Psoas muscle (tissue), 8 donors: ENCODE measurements at regions of chr20 and their contacts with region 1.

Region 1: DNA sequence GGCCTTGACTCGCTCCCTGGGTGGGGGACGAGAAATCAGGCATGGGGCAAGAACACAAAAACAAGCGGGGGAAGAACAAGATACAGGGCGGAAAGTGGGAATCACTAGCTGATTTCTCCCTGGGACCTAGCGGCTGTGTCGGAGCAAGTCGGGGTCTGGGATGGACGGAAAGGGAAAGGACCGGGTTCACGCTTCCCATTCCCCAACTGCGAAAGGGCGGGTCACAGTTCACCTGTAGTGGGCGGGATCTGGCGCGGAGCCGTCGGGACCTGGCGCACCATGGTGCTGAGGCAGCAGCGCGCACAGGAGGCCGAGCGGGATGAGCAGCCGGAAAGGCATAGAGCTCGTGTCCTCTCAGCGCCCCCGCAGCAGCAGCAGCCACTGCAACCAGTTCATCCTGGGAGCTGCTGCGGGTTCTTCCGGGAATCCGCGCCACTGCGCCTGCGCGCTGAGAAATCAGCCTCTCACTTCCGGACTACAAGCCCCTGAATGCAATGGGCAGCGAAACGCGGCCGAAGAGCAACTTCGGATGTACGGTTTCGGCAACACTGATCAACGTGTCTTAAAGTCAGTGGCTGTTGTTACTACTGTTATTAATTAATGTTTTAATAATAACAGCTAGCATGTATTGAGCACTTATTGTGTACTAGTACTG is at the start of gene EDEM2:
- DNase-seq: peak; percentile 96 to 97
- ATAC-seq: peak; percentile 95 to 99 (median 96)
- H3K4me3 ChIP-seq: peak within 1 kb of the TSS; percentile 84
- H3K27ac ChIP-seq: peak within 1 kb of the TSS; percentile 77
- H3K4me1 ChIP-seq: peaks cover 8% of the 10 kb centered on the region
- H3K27me3 ChIP-seq: no peaks in the 10 kb centered on the region
- CTCF ChIP-seq: no peak
- total RNA-seq, gene EDEM2: 5.0 to 8.5 (median 6.2) TPM

Region 2: DNA sequence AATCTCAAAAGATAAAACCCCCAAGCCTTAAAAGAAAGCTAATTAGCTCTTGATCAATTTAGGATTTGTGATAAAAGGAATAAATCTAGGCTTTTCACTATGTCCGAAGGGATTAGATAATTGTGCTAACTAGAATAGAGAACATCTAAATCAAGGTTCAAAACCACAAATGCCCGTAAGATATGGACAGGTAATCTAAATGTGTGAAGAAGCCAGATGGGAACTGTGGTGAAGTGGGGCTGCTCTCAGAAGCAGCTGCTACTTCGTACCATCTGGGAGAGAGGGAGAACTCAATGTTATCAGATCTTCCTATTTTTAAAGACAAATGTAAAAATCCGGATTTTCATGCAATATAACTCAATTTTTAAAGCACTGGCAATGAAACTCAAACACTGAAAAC is 365.8 kb before region 1 on chr20:
- intact Hi-C with region 1: no loop called
- DNase-seq: no peak
- ATAC-seq: no peak
- H3K4me3 ChIP-seq: no peak overlapping the region
- H3K27ac ChIP-seq: peak overlapping the region; percentile 69
- H3K4me1 ChIP-seq: peaks cover 14% of the 10 kb centered on the region
- H3K27me3 ChIP-seq: no peaks in the 10 kb centered on the region
- CTCF ChIP-seq: no peak

Region 3: DNA sequence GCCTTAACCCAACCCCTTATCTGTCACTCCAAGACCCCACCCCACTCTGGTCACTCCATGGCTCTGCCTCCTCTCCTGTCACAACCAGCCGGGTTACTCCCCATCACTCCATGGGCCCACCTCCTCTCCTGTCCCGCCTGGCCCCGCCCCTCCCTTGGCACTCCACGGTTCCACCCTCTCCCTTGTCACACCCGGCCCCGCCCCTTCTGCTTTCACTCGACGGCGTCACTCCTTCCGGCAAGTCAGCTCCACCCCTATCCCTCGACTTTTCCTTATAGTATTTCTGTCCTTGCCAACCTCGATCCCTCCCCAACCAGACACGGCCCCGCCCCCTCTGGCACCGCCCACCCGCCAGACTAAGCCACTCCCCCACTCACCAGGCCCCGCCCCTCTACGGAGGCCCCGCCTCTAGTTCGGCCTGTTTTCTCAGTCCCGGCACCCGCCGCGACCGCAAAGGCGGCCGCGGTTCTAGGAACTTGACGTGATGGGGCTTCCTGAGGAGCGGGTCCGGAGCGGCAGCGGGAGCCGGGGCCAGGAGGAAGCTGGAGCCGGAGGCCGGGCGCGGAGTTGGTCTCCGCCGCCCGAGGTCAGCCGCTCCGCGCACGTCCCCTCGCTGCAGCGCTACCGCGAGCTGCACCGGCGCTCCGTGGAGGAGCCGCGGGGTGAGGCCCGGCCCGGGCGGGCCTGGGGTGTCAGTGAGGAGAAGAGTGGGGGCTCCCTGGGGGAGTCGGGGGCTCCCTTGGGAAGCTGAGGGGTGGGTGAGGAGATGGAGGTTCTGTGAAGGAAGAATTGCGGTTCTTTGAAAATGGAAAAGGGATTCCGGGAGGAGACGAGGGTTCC is 270.7 kb before region 1 on chr20 and contains the start of gene ACSS2:
- intact Hi-C with region 1: no loop called
- DNase-seq: peak; percentile 99
- ATAC-seq: peak; percentile 84 to 90 (median 87)
- H3K4me3 ChIP-seq: peak within 1 kb of the TSS; percentile 97
- H3K27ac ChIP-seq: peak within 1 kb of the TSS; percentile 96
- H3K4me1 ChIP-seq: peaks cover 39% of the 10 kb centered on the region
- H3K27me3 ChIP-seq: no peaks in the 10 kb centered on the region
- CTCF ChIP-seq: no peak
- total RNA-seq, gene ACSS2: 106 to 161 (median 115) TPM

Region 4: GRCh38 chr20:35092524-35093266 is 54.4 kb before region 1 on chr20 and contains the start of gene TRPC4AP:
- intact Hi-C with region 1: loop called in 1 of 2 experiments (anchors 5 kb)
- DNase-seq: peak; percentile 90 to 95
- ATAC-seq: peak; percentile 95 to 98 (median 96)
- H3K4me3 ChIP-seq: peak within 1 kb of the TSS; percentile 82
- H3K27ac ChIP-seq: peak within 1 kb of the TSS; percentile 96
- H3K4me1 ChIP-seq: peaks cover 38% of the 10 kb centered on the region
- H3K27me3 ChIP-seq: no peaks in the 10 kb centered on the region
- CTCF ChIP-seq: peak; percentile 90
- total RNA-seq, gene TRPC4AP: 36.0 to 62.3 (median 58.1) TPM

Region 5: DNA sequence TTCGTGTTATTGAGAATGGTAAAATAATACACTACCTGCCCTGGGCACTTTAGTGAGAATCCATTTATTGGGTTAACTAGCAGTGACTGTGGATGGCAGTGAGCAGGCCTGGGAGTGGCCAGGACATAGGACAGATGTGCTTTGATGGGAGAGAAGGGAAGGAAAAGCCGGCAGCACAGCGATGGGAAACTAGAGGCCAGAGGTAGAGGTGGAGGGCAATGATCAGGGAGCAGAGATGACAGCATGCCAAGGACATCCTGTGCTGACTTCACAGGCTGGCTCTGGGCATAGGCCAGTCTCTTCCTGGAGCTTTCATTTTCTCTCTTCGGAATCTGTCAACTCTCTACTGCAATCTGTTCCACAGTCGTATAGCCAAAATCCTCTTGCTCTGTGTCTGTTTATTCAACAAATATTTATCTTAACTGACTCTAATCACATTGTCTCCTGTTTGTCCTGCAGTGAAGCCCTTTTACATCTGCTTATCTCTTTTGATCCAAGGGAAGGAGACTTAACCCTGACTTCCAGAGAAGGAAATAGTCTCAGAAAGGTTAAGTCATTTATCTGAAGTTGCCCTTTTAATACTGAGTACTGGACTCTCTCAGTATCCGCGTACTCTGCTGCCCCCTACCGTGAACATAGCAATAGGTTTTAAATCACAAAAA is 61.0 kb after region 1 on chr20:
- intact Hi-C with region 1: loop called in 1 of 2 experiments (anchors 2 kb)
- DNase-seq: peak; percentile 78 to 84
- ATAC-seq: peak; percentile 80 to 99 (median 94)
- H3K4me3 ChIP-seq: peak overlapping the region; percentile 30
- H3K27ac ChIP-seq: peak overlapping the region; percentile 65
- H3K4me1 ChIP-seq: peaks cover 6% of the 10 kb centered on the region
- H3K27me3 ChIP-seq: no peaks in the 10 kb centered on the region
- CTCF ChIP-seq: peak; percentile 77

Region 6: DNA sequence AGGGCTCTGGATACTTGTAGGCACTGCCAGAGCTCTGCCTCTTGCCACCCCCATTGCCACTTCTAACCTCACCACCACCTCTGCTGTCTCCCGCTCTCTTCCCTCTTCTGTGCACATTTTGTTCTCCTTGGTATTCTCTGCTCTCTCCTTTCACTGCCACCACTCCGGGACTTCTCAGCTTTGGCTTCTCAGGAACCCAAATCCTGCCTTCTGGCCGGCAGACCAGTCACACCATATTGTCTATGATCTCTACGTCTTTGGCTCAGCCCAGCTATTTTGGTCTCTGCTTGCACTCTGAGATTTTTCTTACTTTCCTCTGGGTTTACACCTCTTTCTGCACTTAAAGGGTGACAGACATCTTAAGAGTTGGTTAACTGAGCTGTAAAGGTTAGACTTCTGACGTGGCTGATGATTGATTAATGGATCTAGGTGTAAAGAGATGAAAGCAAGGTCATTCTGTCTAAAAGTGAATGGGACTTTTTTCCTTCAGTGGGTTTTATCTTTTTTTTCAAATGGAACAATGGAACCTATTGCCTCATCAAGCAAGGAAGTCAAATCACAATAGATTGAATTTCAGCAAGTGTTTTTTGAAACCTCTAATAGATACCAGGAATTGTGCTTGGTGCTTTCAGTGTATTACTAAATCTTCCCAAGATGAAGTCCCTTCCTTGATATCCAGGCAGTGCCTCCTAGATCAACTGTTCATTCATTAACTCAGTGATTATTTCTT is 93.2 kb after region 1 on chr20:
- intact Hi-C with region 1: no loop called
- DNase-seq: no peak
- ATAC-seq: no peak
- H3K4me3 ChIP-seq: no peak overlapping the region
- H3K27ac ChIP-seq: no peak overlapping the region
- H3K4me1 ChIP-seq: no peaks in the 10 kb centered on the region
- H3K27me3 ChIP-seq: no peaks in the 10 kb centered on the region
- CTCF ChIP-seq: no peak

Region 7: DNA sequence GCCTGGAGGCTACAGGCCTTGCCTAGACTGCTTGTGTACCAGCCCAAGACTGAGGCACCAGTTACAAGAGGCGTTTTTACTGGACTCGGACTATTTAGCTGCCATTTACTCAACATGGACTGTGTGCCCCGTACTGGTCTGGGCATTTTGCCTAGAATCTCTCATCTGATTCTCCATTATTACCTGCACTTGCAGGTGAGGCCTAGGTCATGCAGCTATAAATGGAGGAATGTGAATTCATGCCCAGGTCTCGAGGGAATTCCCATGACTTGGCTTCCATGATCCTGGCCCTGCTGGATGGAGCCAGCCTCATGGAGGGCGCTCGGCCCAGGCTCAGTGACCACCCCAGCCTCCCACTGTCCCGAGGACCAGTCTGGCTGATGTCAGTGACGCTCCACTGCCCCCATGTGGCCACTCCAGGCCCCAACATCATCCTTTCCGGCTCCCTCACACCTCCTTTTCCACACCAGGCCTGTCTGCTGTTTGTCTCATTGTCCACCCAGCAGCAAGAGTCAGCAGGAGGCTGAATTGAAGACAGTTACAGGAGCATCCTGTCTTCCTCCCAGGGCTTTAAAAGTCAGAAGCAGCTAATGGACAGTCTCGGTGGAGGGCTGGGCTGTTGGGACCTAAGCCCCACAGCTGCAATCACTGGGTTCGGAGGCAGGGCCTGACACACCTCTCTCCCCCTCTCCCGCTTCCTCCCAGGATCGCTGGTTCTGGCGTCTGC is 122.2 kb after region 1 on chr20:
- intact Hi-C with region 1: loop called (anchors 5 to 10 kb)
- DNase-seq: peak; percentile 66 to 76
- ATAC-seq: peak; percentile 72 to 83 (median 76)
- H3K4me3 ChIP-seq: no peak overlapping the region
- H3K27ac ChIP-seq: no peak overlapping the region
- H3K4me1 ChIP-seq: no peaks in the 10 kb centered on the region
- H3K27me3 ChIP-seq: no peaks in the 10 kb centered on the region
- CTCF ChIP-seq: peak; percentile 56

Region 8: GRCh38 chr20:35277531-35278395 is 130.7 kb after region 1 on chr20 and contains the start of gene MMP24OS:
- intact Hi-C with region 1: loop called (anchors 5 to 10 kb)
- DNase-seq: peak; percentile 91 to 95
- ATAC-seq: peak; percentile 93 to 98 (median 96)
- H3K4me3 ChIP-seq: peak within 1 kb of the TSS; percentile 93
- H3K27ac ChIP-seq: peak within 1 kb of the TSS; percentile 97
- H3K4me1 ChIP-seq: peaks cover 8% of the 10 kb centered on the region
- H3K27me3 ChIP-seq: no peaks in the 10 kb centered on the region
- CTCF ChIP-seq: no peak
- total RNA-seq, gene MMP24OS: 25.1 to 40.6 (median 27.2) TPM

Region 9: GRCh38 chr20:35454881-35455609 is 308.0 kb after region 1 on chr20 and contains the start of gene CEP250:
- intact Hi-C with region 1: loop called in 1 of 2 experiments (anchors 10 kb)
- DNase-seq: peak; percentile 92 to 97
- ATAC-seq: peak; percentile 97 to 99 (median 98)
- H3K4me3 ChIP-seq: peak within 1 kb of the TSS; percentile 81
- H3K27ac ChIP-seq: peak within 1 kb of the TSS; percentile 92
- H3K4me1 ChIP-seq: peaks cover 17% of the 10 kb centered on the region
- H3K27me3 ChIP-seq: no peaks in the 10 kb centered on the region
- CTCF ChIP-seq: no peak
- total RNA-seq, gene CEP250: 17.0 to 19.3 (median 17.6) TPM